PC-9 (cell line): ENCODE measurements at regions of chr2 and their contacts with region 1.

Region 1: DNA sequence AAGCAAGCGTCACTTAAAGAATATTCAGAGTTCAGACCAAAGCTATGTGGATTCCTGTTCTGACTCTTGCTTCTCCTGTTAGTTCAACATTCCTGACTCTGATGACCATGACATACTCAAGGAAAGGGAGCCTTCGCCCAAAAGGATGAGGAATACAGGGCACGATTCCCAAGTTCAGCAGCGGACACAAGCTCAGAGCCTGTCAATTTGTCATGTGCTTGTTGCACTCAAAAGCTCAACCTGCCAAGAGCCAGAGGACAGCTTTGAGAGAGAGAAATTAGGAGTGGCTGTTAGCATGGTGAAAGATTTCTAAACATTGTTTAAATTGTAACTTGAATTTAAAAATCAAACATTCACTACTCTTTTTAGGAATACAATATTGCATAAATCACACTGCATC is 33.3 kb downstream of the APLF start:
- DNase-seq: no peak
- H3K4me3 ChIP-seq: no peak overlapping the region
- H3K27ac ChIP-seq: no peak overlapping the region
- H3K4me1 ChIP-seq: no peaks in the 10 kb centered on the region
- H3K27me3 ChIP-seq: no peaks in the 10 kb centered on the region
- CTCF ChIP-seq: no peak

Region 2: DNA sequence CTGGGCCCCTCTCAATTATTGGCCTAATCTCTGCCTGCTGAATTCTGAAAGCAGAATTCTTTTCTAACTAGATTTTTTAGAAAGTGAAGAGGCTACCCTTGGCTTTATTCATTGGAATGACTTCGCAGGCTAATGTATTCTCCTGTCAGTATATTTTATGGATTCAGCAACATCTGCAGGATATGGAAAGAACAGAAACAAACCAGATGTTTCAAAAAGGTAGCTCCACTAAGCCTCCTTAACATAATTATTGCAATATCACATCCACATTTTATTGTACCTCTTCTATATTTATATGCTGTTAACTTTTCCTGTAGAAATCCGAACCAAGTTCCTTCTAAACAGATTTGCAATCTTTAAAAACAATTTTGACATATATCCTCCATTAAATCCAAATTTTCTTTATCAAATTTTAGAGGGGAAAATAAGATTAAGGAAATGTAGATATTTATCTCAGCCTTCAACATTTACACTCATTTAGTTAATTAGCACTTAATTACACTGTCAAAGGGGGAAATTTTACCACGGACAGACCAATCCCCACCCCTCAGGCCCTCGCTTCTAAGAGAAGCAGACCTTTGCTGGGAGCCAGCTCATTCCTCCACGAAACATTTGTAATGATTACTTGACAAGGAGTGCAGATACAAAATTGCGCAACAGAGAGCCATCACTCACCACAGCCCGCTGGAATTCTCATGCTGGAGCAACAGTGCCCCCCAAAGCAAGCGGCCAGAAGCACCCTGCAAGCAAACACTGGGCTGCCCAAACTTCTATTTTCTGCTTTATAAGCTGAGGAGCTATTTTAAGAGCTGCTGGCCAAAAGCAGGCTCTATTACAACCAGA is 850.1 kb before region 1 on chr2:
- CTCF ChIA-PET with region 1: no interaction called
- POLR2A ChIA-PET with region 1: no interaction called
- intact Hi-C with region 1: no loop called
- DNase-seq: peak in 1 of 2 experiments; percentile 32
- H3K4me3 ChIP-seq: no peak overlapping the region
- H3K27ac ChIP-seq: no peak overlapping the region
- H3K4me1 ChIP-seq: no peaks in the 10 kb centered on the region
- H3K27me3 ChIP-seq: no peaks in the 10 kb centered on the region
- CTCF ChIP-seq: peak; percentile 68

Region 3: GRCh38 chr2:68176657-68177056 is 324.0 kb before region 1 on chr2:
- CTCF ChIA-PET with region 1: no interaction called
- POLR2A ChIA-PET with region 1: no interaction called
- intact Hi-C with region 1: no loop called
- DNase-seq: no peak
- H3K4me3 ChIP-seq: no peak overlapping the region
- H3K27ac ChIP-seq: no peak overlapping the region
- H3K4me1 ChIP-seq: no peaks in the 10 kb centered on the region
- H3K27me3 ChIP-seq: no peaks in the 10 kb centered on the region
- CTCF ChIP-seq: no peak

Region 4: DNA sequence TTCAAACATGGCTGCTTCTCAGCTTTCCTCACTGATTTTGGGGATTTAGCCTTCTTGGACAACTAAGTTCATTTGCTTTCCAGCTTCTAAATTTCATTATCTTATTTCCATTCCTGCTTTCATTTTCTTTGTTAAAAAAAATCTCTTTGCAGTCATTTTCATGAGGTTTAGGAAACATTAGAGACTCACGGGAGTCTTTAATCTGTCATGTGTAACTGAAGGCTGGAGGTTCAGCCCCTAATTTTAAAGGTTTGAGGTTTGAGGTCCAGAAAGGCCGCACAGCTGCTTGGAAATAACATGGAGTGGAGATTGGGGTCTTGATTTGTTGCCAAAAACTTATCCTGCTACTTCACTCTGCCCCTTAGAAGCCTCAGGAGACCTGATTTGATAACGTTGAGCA is 173.0 kb after region 1 on chr2:
- CTCF ChIA-PET with region 1: interaction called, 18 read pairs
- POLR2A ChIA-PET with region 1: no interaction called
- intact Hi-C with region 1: no loop called
- DNase-seq: no peak
- H3K4me3 ChIP-seq: no peak overlapping the region
- H3K27ac ChIP-seq: no peak overlapping the region
- H3K4me1 ChIP-seq: no peaks in the 10 kb centered on the region
- H3K27me3 ChIP-seq: peaks cover 4% of the 10 kb centered on the region; the same call in 1 of the 2 replicates
- CTCF ChIP-seq: no peak